ENCODE measurements at regions of chr19 and their contacts with region 1.

Region 1: DNA sequence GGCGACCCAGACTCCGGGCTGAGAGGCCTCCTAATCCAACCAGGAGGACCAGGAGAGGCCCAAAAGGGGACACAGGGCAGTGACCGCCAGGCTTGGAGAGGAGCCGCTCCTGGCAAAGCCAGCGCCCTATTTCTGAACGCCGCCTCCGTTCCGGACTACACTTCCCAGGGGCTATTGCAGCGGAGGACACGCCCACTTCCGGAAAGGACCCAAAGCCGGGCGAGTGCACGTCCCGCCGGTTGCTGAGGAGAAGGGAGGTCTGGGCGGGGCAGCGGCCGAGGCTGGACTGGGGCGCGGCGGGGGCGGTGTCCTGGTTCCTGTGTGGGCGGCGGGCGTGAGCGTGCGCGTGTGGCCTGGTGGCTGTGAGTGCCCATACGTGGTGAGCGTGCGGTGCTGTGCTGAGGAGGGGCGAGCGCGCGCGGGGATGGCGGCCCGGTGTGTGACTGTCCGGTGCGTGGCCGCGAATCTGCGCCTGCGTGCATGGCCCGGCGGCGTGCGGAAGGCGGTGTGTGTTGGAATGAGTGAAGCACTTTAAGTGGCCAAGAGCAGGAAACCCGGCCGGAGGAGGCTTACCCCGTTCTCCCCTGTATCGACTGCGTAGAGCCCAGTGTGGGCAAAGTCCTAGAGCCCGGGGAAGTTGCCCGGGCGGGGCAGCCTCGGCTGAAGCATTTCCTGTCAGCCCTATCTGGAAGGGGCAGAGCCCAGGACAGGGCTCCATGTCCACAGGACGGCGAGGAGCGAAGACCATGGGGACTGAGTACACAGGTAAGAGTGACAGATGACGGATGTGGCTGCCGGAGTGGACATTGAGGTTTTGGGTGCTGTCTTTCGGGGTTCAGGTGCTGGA is at the start of gene ZNF470:
- DNase-seq: peak; percentile 87 to 99 (median 94)

Region 2: GRCh38 chr19:56538254-56538760 is 29.2 kb before region 1 on chr19:
- intact Hi-C with region 1: loop called (anchors 2 kb)
- DNase-seq: peak; percentile 92 to 99 (median 96)

Region 3: GRCh38 chr19:56594783-56595547 is 27.5 kb after region 1 on chr19 and contains the start of gene ZNF71:
- intact Hi-C with region 1: loop called (anchors 1 kb)
- DNase-seq: peak; percentile 82 to 98 (median 86)

Region 4: GRCh38 chr19:56671613-56671994 is 104.1 kb after region 1 on chr19 and contains the start of gene ZNF835:
- intact Hi-C with region 1: no loop called
- DNase-seq: peak; percentile 94 to 99 (median 97)